Activated T-helper 1 cell treated with anti-CD3 and anti-CD28 coated beads, Interleukin-12 subunit alpha, Interleukin-12 subunit beta, Interleukin-2, Interleukin-4 antibody, amounts not matched to agents 30 ng/mL and 10 ng/mL and 1 ng/mL, durations not matched to agents 14 hours and 24 hours and 36 hours (primary cell): ENCODE measurements at regions of chr3 and their contacts with region 1.

Region 1: DNA sequence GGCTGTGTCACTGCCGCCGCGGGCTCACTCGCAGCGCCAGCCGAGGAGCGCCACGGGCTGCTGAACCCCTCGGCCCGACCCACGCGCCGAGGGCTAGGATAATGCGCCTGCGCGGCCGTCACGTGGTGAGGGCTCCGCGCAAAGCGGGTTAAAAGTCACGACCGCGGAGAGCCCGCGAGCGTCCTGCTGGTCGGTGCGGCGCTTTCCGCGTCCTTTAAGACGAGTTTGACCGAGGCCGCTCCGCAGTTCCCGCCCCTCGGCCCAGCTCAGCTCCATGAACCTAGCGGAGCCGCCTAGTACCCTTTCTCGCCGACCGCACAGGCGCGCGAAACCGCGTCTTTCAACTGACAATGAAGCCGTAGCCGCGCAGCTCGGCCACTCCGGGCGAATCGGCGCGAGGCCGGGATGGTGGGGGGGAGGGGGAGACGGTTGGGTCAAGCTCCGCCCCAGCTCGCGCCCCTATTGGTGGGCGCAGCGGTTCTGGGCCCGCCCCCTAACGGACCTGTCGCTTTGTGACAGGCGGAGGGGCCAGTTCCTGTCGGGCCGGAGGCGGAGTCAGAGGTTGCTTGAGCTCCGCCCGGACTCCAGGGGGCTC is 636 bp upstream of the STT3B start:
- DNase-seq: peak; percentile 98
- H3K4me3 Mint-ChIP-seq: no peak overlapping the region
- H3K27ac Mint-ChIP-seq: peak overlapping the region; percentile 99
- H3K4me1 Mint-ChIP-seq: peaks cover 21% of the 10 kb centered on the region
- H3K27me3 Mint-ChIP-seq: no peaks in the 10 kb centered on the region

Region 2: GRCh38 chr3:30623351-30623750 is 908.7 kb before region 1 on chr3:
- intact Hi-C with region 1: loop called (anchors 5 kb)
- DNase-seq: no peak
- H3K4me3 Mint-ChIP-seq: peak overlapping the region; percentile 66
- H3K27ac Mint-ChIP-seq: peak overlapping the region; percentile 90
- H3K4me1 Mint-ChIP-seq: peaks cover 83% of the 10 kb centered on the region
- H3K27me3 Mint-ChIP-seq: no peaks in the 10 kb centered on the region

Region 3: DNA sequence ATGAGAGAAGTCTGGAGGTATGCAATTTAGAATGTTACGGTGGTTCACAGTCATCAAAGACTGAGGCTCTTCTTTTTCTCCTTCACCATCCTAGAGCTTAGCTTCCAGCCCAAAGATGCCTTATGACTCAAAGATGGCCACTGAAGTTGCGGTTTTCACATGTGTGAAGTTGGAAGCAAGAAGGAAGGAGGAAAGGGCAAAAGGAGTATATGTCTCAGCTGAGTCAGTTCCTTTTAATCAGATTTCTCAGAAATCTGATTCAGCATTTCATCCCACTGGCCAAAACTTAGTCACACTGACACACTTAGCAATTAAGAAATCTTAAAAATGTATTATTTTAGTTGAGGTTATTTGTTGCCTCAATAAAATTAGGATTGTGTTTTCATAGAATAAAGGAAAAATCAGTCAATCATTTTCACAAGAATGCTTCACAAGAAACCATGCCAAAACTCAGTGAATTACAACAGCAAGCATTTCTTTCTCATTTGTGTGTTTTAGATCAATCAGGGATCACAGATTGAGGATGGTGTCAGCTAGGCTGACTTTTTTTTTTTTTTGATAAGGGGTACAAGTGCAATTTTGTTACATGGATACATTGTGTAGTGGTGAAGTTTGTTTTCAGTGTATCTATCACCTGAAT is 426.5 kb before region 1 on chr3:
- intact Hi-C with region 1: loop called (anchors 1 kb)
- DNase-seq: peak; percentile 17
- H3K4me3 Mint-ChIP-seq: no peak overlapping the region
- H3K27ac Mint-ChIP-seq: peak overlapping the region; percentile 49
- H3K4me1 Mint-ChIP-seq: peaks cover 55% of the 10 kb centered on the region
- H3K27me3 Mint-ChIP-seq: no peaks in the 10 kb centered on the region

Region 4: DNA sequence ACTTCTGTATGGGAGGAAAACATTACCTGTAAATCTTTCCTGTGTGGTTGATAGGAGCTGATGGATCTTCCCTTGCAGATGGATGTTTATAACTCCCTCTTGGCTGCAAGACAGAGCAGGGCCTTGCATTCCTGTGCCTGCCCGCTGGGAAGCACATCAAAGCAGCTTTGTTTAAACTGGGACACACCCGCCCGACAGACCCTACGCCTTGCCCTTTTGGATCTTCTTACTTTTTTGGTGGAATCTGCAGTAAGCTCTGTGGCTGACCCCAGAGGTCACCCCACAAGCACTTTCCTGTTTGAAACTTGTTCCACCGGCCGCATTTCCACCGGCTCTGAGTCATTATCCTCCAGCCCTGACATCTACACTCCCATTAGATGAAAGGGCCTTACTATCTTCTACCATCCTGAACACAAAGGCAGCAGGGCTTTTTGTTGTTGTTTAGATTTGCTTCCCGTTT is 243.4 kb before region 1 on chr3:
- intact Hi-C with region 1: loop called (anchors 2 kb)
- DNase-seq: peak; percentile 44
- H3K4me3 Mint-ChIP-seq: peak overlapping the region; percentile 46
- H3K27ac Mint-ChIP-seq: peak overlapping the region; percentile 87
- H3K4me1 Mint-ChIP-seq: peaks cover 49% of the 10 kb centered on the region
- H3K27me3 Mint-ChIP-seq: no peaks in the 10 kb centered on the region

Region 5: GRCh38 chr3:31561901-31562341 is 29.8 kb after region 1 on chr3:
- intact Hi-C with region 1: loop called (anchors 1 kb)
- DNase-seq: no peak
- H3K4me3 Mint-ChIP-seq: no peak overlapping the region
- H3K27ac Mint-ChIP-seq: peak overlapping the region; percentile 42
- H3K4me1 Mint-ChIP-seq: peaks cover 80% of the 10 kb centered on the region
- H3K27me3 Mint-ChIP-seq: no peaks in the 10 kb centered on the region

Region 6: GRCh38 chr3:31695280-31696008 is 163.4 kb after region 1 on chr3:
- intact Hi-C with region 1: no loop called
- DNase-seq: no peak
- H3K4me3 Mint-ChIP-seq: no peak overlapping the region
- H3K27ac Mint-ChIP-seq: no peak overlapping the region
- H3K4me1 Mint-ChIP-seq: no peaks in the 10 kb centered on the region
- H3K27me3 Mint-ChIP-seq: no peaks in the 10 kb centered on the region

Region 7: GRCh38 chr3:31981206-31982181 is 449.4 kb after region 1 on chr3 and contains the starts of genes OSBPL10 and ZNF860:
- intact Hi-C with region 1: loop called (anchors 10 kb)
- DNase-seq: peak; percentile 4
- H3K4me3 Mint-ChIP-seq: peak within 1 kb of the TSS; percentile 87
- H3K27ac Mint-ChIP-seq: peak within 1 kb of the TSS; percentile 62
- H3K4me1 Mint-ChIP-seq: peaks cover 27% of the 10 kb centered on the region
- H3K27me3 Mint-ChIP-seq: peaks cover 17% of the 10 kb centered on the region
- total RNA-seq, gene OSBPL10: 12.1 and 14.5 TPM in 2 replicates
- total RNA-seq, gene ZNF860: 0.34 and 0.81 TPM in 2 replicates

Region 8: DNA sequence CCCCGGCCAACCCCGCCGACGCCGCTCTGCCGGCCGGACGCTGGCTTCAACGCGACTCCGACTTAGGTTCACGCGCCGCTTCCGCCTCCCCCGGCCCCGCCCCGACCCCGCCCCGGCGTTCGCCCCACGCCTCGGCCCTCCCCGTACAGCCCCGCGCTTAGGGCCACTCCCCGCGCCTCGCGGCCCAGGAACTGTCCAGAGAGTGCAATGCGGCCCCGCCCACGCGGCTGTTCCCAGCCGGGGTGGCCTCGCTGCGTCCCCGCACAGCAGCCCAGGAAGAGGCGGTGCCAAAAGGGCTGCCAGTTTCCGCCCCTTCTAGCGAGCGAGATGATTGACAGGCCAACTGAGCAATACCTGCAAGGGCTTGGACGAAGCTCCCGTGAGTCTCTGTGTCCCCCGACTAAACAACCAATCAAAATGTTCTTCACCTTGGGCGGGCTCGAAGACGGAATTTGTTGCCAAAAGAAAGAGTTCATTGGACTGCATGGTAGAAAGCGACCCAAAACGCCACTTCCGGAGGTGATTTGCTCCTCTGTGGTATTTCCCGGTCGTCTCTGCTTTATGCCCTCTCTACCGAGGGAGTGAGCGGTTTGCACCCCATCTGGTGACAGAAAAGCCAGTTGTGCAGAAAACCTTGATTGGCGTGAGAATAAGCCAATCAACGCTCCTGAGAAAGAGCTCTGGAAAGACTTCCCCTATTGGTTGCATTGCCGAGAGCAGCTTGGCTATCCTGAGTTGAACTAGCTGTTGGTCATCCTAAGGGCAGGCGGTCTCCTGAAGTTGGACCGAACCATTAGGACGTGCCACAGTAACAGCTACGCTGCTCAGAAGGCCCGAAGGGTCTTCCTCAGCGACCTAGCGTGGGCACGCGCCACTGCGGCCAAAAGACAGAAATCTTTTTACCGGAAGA is 1908.5 kb after region 1 on chr3 and contains the start of gene UBP1:
- intact Hi-C with region 1: loop called (anchors 2 kb)
- DNase-seq: peak; percentile 99
- H3K4me3 Mint-ChIP-seq: peak within 1 kb of the TSS; percentile 100
- H3K27ac Mint-ChIP-seq: peak within 1 kb of the TSS; percentile 100
- H3K4me1 Mint-ChIP-seq: peaks cover 54% of the 10 kb centered on the region
- H3K27me3 Mint-ChIP-seq: no peaks in the 10 kb centered on the region
- total RNA-seq, gene UBP1: 69.4 and 71.6 TPM in 2 replicates